ENCODE measurements at regions of chr7 and their contacts with region 1.

Region 1: DNA sequence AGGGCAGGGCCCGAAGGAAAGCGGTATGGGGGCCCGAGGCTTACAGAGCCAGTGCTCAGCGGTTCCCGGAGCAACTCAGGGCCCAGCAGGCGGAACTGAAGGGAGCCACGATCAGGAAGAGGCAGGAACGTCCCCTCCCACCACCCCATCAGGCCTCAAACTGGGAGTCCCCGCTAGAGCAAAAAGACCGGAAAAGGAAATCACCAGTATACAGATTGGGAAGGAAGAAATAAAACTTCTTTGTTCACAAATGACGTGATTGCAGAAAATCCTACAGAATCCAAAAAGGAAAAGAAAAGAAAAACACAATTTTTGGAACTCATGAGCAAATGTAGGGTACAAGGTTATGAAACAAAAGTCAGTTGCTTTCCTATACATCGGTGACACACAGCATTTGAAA is 21.6 kb upstream of the ZFAND2A start:
- DNase-seq: no peak
- CTCF ChIP-seq: no peak

Region 2: GRCh38 chr7:1193593-1194424 is 12.2 kb after region 1 on chr7:
- CTCF ChIA-PET with region 1: interaction called, 11 read pairs
- POLR2A ChIA-PET with region 1: no interaction called
- DNase-seq: no peak
- CTCF ChIP-seq: peak; percentile 24

Region 3: DNA sequence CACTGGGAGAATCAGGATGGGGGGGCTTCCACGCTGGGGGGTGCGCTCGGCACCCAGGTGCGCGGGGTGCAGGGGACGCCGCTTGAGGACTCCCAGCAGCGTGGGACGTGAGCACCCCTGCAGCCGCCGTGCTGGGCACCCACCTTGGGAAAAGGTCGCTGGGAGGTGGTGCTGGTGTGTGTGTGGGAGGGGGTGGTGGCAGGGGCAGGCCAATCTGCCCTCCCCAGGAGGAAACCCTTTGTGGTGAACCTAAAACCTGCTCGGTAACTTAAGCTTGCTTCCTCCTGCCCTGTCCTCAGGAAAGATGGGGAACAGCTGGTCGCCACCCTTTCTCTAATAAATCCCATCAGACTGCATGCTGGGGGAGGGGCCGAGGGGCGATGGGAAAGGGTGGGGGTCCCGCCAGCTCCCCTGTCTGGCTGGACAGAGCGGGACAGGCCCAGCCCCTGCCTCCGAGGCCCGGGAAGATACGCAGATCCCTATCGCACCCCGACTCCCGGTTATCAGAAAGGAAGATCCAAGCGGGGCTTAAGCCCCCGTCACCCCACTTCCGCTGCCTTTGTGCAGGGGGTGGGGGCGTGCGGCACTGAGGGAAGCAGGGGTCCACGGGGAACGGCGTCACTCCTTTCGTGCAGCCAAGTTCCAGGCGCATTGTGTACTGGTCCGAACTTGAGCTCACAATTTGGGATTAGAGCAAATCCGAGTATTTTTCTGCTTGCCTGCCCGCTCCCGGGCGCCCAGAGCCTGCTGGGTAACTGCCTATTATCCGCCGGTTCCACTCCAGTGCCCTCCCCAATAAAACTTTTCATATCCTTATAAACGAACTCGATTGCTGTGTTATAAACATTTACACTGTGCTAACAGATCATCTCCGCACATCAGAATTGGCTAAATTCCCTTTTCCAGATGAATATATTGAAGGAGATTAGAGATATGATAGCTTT is 115.6 kb after region 1 on chr7:
- CTCF ChIA-PET with region 1: no interaction called
- POLR2A ChIA-PET with region 1: no interaction called
- DNase-seq: no peak
- CTCF ChIP-seq: no peak